GM10248 (cell line): ENCODE measurements at regions of chr15 and their contacts with region 1.

Region 1: GRCh38 chr15:43370975-43371974 is at the starts of genes TUBGCP4 and ZSCAN29:
- DNase-seq: peak; percentile 96
- CTCF ChIP-seq: peak; percentile 49

Region 2: DNA sequence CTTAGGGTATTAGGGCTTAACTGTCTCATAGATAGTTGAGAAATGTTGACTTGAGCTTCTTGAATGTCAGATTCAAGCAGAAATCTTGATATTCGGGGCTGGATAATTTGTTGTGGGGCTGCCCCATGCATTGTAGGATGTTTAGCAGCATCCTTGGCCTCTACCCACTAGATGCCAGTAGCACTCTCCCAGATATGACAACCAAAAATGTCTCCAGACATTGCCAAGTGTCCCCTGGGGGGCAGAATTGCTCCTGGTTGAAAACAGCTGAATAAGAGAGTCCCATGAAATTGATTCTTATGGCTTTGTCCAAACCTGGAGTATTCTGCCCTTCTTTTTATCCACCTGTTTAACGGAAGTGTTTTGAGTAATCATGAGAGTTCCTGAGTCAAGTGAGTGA is 25.0 kb before region 1 on chr15:
- CTCF ChIA-PET with region 1: interaction called, 10 read pairs
- POLR2A ChIA-PET with region 1: no interaction called
- DNase-seq: no peak
- CTCF ChIP-seq: peak; percentile 35